Sigmoid colon (tissue), 7 donors: ENCODE measurements at regions of chr19 and their contacts with region 1.

Region 1: GRCh38 chr19:39557441-39558151 is 17.6 kb upstream of the EID2 start:
- DNase-seq: no peak
- H3K4me3 ChIP-seq: peak overlapping the region in 1 of 4 donors; percentile 12
- H3K27ac ChIP-seq: no peak overlapping the region
- H3K4me1 ChIP-seq: peaks cover 0 to 5% (median 0%) of the 10 kb centered on the region in 4 donors
- H3K27me3 ChIP-seq: no peaks in the 10 kb centered on the region
- CTCF ChIP-seq: no peak
- EP300 ChIP-seq: no peak
- POLR2A ChIP-seq: no peak

Region 2: GRCh38 chr19:38891771-38892170 is 665.8 kb before region 1 on chr19:
- intact Hi-C with region 1: no loop called
- DNase-seq: no peak
- H3K4me3 ChIP-seq: no peak overlapping the region
- H3K27ac ChIP-seq: no peak overlapping the region
- H3K4me1 ChIP-seq: peaks cover 0 to 27% (median 7%) of the 10 kb centered on the region in 4 donors
- H3K27me3 ChIP-seq: no peaks in the 10 kb centered on the region
- CTCF ChIP-seq: no peak
- EP300 ChIP-seq: no peak
- POLR2A ChIP-seq: no peak

Region 3: DNA sequence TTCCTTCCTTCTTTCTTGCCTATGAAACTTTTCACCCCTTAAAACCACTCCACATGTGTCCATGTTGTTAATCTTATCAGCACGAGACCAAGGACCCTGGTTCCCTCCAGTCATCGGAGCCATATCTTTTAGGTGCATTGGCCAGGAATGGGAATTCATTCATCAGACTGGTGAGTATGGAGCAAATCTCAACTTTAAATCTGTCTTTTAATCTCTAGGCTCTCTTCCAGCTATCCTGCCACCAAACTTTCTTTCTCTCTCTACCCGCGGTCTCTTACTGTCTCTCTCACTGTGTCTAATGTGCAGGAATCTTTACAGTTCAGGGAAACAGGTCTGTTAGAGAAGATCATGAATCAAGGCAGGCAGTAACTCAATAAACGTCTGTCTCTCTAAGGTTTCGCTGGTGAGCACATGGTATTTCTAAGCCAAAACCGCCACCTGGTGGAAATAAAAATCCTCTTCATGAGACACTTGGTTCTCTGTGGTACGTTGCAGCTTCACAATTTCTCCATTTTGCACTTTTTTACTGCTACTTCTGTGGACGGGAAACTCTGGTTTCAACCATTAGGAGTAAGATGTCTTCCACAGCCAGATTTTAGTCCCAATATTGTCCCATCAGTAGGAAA is 114.3 kb after region 1 on chr19:
- intact Hi-C with region 1: loop called (anchors 1 kb)
- DNase-seq: no peak
- H3K4me3 ChIP-seq: no peak overlapping the region
- H3K27ac ChIP-seq: no peak overlapping the region
- H3K4me1 ChIP-seq: no peaks in the 10 kb centered on the region
- H3K27me3 ChIP-seq: peaks cover 0 to 12% (median 0%) of the 10 kb centered on the region in 3 donors
- CTCF ChIP-seq: peak in 3 of 4 experiments; percentile 31 to 45 (median 32)
- EP300 ChIP-seq: no peak
- POLR2A ChIP-seq: no peak

Region 4: DNA sequence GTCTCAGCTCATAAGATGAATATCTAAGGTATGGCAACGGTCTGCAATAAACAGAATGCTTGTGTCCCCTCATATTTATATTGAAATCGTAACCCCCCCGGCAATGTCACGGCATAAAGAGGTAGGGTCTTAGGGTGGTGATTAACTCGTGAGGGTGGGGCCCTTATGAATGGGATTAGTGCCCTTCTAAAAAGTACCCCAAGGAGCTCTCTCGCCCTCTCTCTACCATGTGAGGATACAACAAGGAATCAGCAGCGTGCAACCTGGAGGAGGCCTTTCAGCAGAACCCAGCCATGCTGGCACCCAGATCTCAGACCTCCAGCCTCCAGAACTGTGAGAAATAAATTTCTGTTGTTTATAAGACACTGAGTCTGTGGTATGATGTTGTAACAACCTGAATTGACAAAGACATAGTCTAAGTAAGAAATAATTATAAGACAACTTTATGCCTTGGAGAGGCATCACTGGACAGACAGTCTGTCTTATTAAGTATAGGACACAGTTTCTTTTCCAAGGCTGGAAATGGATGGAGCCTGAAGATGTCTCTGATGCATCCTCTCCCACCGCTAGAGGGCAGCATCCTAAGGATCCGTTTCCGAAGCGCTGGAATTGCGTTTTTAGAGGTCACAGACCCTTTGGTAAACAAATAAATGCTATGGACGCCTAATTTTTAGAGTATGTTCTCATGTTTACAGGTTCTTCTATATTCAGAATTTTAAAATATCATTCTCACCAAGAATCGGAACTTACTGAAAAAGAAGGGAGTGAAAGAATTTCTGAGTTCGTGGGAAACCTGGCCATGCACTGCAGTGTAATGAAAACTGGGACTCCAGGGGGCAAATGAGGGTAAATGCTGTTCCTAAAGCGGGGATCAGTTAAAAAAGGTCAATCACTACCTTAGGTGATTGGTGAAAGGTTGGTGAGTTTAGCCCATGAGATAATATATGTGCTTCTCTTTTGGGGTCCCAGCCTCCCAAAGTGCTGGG is 207.8 kb after region 1 on chr19:
- intact Hi-C with region 1: loop called (anchors 10 kb)
- DNase-seq: no peak
- H3K4me3 ChIP-seq: no peak overlapping the region
- H3K27ac ChIP-seq: no peak overlapping the region
- H3K4me1 ChIP-seq: no peaks in the 10 kb centered on the region
- H3K27me3 ChIP-seq: peaks cover 0 to 8% (median 0%) of the 10 kb centered on the region in 3 donors
- CTCF ChIP-seq: peak in 2 of 4 experiments; percentile 19 to 67
- EP300 ChIP-seq: no peak
- POLR2A ChIP-seq: no peak